ENCODE measurements at regions of chr10 and their contacts with region 1.

Region 1: DNA sequence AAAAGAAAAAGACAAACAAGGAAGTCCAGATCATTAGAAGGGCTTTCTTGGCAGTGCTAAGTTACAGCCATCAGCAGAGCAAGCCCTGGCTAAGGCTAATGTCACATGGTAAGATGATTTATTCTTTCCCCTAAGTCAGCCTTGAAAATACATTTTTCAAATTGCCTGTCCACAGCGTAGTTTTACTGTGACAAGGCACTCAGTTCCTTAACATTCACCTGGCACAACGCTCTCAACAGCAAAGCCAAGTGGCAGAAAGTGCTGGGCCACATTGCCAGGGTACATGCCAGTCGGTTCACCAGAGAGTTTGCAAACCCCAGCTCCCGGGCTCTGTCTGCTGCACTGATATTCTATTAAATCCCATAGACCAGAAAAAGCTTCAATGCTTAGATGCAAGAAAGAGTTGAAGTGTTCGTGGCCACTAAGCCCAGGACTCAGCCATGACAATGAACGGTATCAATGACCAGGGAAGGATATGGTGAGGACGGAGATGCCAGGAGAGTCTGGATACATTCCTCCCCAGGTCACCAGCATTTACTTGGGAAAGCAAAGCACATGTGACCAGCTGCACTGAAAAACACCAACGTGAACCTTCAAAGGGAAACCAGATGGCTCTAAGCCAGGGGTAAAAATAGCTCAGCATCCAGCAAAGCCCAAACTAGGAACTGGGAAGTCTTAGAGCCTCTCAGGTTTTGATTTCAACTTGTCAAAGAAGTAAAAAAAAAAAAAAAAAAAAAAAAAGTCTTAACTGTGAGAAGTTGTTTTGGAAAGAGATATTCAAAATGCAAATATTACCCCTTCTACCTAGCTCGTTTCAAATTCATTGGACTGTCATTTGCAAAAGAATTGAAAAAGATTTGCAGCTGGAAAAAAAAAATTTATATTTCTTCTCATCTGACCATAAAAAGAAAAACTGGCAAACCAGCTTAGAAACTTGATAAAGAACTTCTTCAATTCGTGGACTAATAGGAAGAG is 23.9 kb upstream of the MPP7 start:
- DNase-seq: no peak
- ATAC-seq: no peak
- H3K4me3 Mint-ChIP-seq: no peak overlapping the region
- H3K27ac Mint-ChIP-seq: peak overlapping the region; percentile 34
- H3K4me1 Mint-ChIP-seq: peaks cover 41% of the 10 kb centered on the region
- H3K27me3 Mint-ChIP-seq: no peaks in the 10 kb centered on the region

Region 2: DNA sequence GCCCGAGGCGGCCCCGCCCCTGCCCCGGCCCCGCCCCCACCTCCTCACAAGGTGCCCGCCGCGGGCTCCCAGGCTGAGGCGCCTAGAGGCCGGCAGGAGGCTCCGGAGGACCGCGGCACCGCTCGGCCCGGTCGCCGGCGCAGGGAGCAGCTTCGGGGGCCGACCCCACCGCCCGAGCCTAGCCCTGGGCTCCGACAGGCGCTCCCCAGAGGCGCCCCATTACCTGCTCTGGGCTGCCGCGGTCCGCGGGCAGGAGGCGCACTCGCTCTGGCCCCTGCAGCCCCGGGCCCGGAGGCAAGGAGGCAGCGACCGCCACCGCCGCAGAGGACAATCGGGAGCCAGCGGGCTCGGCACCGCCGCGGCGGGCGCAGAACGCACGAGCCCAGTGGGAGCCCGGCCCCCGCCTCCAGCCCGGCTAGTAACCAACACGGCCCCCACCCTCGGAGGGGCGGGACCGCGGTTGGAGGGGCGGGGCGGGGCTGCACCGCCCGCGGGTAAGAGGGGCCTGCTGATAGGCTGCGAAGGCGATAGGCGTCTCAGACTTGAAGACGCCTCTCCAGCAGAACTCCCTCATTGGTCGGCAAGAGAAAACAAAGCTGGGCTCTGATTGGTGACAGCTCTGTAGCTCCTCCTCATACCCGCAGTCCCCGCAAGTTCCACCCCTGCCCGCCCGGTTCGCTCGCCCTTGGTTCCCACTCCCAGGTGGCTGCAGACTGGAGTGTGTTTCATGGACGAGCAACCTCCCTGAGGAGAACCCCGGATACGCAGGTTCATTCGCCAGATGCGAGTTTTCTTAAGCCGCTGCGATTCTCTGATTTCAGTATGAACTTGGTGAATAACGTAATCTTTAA is 23.9 kb before region 1 on chr10 and contains the start of gene MPP7:
- CTCF ChIA-PET with region 1: interaction called, 114 read pairs
- POLR2A ChIA-PET with region 1: interaction called, 9 read pairs
- intact Hi-C with region 1: no loop called
- DNase-seq: peak; percentile 97
- ATAC-seq: peak; percentile 97
- H3K4me3 Mint-ChIP-seq: peak within 1 kb of the TSS; percentile 90
- H3K27ac Mint-ChIP-seq: peak within 1 kb of the TSS; percentile 80
- H3K4me1 Mint-ChIP-seq: peaks cover 49% of the 10 kb centered on the region
- H3K27me3 Mint-ChIP-seq: no peaks in the 10 kb centered on the region
- total RNA-seq, gene MPP7: 10.9 to 11.0 TPM

Region 3: GRCh38 chr10:28393966-28394568 is 67.3 kb after region 1 on chr10:
- CTCF ChIA-PET with region 1: interaction called, 21 read pairs
- POLR2A ChIA-PET with region 1: no interaction called
- intact Hi-C with region 1: no loop called
- DNase-seq: peak; percentile 82
- ATAC-seq: peak; percentile 87
- H3K4me3 Mint-ChIP-seq: no peak overlapping the region
- H3K27ac Mint-ChIP-seq: no peak overlapping the region
- H3K4me1 Mint-ChIP-seq: peaks cover 4% of the 10 kb centered on the region
- H3K27me3 Mint-ChIP-seq: peaks cover 4% of the 10 kb centered on the region

Measured in activated CD4-positive, alpha-beta T cell treated with anti-CD3 and anti-CD28 coated beads for 36 hours (primary cell).